Adrenal gland (tissue), 19 donors: ENCODE measurements at regions of chr5 and their contacts with region 1.

Region 1: DNA sequence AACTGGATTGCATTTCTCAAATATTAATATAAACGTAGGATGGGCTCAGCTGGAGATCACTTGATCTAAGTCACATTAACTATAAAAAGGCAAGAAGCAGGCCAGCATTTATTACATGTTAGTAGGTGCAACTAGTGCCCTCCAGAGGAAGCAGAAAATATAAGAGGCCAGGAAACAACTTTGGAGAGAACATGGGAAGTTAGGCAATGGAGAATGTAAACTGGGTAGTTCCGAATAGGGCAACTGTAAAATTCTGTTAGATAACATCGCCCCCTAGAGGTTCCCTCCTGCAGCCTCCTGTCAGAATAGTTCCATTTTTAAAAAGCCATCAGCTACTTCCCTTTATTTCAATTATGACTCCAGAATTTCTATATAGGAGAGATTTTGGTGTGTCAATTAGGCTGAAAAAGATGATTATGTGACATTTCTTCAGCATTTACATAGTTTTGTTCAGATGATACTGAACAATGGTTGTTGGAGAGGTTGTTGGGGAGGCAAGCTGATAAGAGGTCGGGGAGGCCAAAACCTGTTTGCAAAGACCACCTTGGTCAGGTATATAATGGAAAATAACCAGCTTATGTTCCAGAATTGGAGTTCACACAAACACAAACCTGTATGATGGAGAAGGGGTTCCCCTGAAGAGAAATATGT is 22.4 kb downstream of the CCL28 start:
- DNase-seq: peak; percentile 49 to 81 (median 67)
- H3K4me3 ChIP-seq: no peak overlapping the region
- H3K27ac ChIP-seq: no peak overlapping the region
- H3K4me1 ChIP-seq: no peaks in the 10 kb centered on the region
- H3K27me3 ChIP-seq: no peaks in the 10 kb centered on the region
- CTCF ChIP-seq: peak; percentile 77 to 93 (median 83)
- POLR2A ChIP-seq: no peak

Region 2: DNA sequence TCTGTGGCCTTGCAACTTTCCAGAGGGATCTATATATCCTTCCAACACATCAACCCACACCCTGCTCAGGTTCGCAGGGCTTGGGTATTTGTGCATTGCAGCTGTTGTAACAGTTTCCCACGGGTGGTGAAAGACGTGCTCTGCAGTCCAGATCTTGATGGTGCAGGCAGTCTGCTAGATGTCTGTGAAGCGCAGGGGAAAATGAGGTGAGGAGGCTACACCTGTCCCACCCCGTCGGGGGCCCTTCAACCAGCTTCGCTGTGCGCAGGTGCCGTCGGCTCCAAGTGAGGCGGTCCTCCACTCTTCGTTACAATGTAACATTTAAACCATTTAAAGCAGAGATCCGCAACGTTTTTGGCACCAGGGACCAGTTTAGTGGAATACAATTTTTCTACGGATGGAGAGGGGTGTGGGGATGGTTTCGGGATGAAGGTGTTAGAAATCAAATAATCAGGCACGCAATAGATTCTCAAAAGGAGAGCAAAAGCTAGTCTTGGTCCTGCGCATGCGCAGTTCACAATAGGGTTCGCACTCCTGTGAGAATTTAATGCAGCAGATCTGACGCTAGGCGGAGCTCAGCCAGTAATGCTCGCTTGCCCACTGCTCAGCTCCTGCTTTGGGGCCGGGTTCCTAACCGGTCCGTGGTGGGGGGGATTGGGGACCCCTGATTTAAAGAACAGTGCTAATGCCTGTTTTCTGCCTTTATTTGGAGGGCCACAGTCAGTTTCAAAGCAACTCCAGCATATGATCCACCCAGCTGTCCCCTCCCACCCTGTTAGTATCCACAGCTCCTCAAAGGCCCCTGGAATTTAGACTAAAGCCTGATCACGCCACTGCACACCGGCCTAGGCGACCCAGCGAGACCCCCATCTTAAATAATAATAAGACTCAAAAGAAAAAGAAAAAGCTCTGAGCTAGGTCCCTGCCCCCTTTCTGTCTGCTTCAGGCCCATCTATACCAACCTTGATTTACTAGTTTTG is 481.0 kb before region 1 on chr5:
- intact Hi-C with region 1: loop called in 1 of 2 experiments (anchors 5 kb)
- DNase-seq: peak; percentile 86 to 95 (median 90)
- H3K4me3 ChIP-seq: peak overlapping the region in 2 of 4 donors; percentile 38 to 61
- H3K27ac ChIP-seq: no peak overlapping the region
- H3K4me1 ChIP-seq: peaks cover 0 to 5% of the 10 kb centered on the region in 2 donors
- H3K27me3 ChIP-seq: peaks cover 8% of the 10 kb centered on the region
- CTCF ChIP-seq: peak; percentile 70 to 93 (median 88)
- POLR2A ChIP-seq: no peak

Region 3: GRCh38 chr5:43105369-43106289 is 284.2 kb before region 1 on chr5:
- intact Hi-C with region 1: loop called in 1 of 2 experiments (anchors 10 kb)
- DNase-seq: peak; percentile 88 to 96 (median 94)
- H3K4me3 ChIP-seq: peak overlapping the region in 3 of 4 donors; percentile 10 to 44 (median 16)
- H3K27ac ChIP-seq: peak overlapping the region in 4 of 5 donors; percentile 36 to 82 (median 63)
- H3K4me1 ChIP-seq: peaks cover 0 to 7% of the 10 kb centered on the region in 2 donors
- H3K27me3 ChIP-seq: no peaks in the 10 kb centered on the region
- CTCF ChIP-seq: peak; percentile 99 to 100 (median 100)
- POLR2A ChIP-seq: no peak

Region 4: GRCh38 chr5:43227655-43228054 is 162.1 kb before region 1 on chr5:
- intact Hi-C with region 1: loop called (anchors 5 to 10 kb)
- DNase-seq: peak in 2 of 7 donors; percentile 12 to 22
- H3K4me3 ChIP-seq: no peak overlapping the region
- H3K27ac ChIP-seq: no peak overlapping the region
- H3K4me1 ChIP-seq: no peaks in the 10 kb centered on the region
- H3K27me3 ChIP-seq: no peaks in the 10 kb centered on the region
- CTCF ChIP-seq: peak in 5 of 6 experiments; percentile 45 to 66 (median 57)
- POLR2A ChIP-seq: no peak

Region 5: DNA sequence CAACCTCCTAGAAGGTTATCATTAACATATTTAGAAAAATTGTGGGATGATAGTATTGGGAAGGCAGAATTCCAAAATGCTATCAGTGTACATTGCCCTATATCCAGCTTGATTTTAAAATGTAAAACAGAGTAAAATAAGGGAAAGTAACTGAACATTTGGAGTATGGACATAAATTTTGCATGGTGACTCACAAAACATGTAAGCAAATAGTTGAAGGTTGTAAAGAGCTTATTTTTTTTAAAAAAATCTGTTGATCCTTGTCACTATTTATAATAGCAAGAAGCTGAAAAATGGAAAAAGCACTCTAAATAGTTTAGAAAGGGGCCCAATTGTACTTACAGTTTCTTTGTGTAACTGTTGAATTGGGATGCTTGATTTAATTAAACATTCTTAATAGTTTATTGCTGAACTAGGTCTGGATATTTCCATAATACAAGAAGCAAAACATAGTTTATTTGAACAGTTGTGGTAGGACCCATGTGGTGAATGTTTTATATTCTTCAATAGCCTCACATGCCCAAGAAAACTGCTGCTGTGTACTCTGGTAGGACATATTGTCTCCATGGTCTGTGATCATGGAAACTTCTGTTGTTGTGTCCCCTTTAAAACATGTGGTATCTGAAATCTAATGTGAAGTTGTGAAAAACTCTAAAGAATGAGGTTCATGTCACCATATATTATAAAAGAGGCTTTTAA is 295.6 kb after region 1 on chr5:
- intact Hi-C with region 1: no loop called
- DNase-seq: no peak
- H3K4me3 ChIP-seq: no peak overlapping the region
- H3K27ac ChIP-seq: peak overlapping the region in 3 of 5 donors; percentile 38 to 63 (median 41)
- H3K4me1 ChIP-seq: peaks cover 12 to 30% of the 10 kb centered on the region in 2 donors
- H3K27me3 ChIP-seq: no peaks in the 10 kb centered on the region
- CTCF ChIP-seq: no peak
- POLR2A ChIP-seq: no peak